OCI-LY7 (cell line): ENCODE measurements at regions of chr6 and their contacts with region 1.

Region 1: GRCh38 chr6:100833972-100834574 is 47.1 kb downstream of the ASCC3 start:
- DNase-seq: no peak
- H3K4me3 ChIP-seq: no peak overlapping the region
- H3K27ac ChIP-seq: no peak overlapping the region
- H3K4me1 ChIP-seq: no peaks in the 10 kb centered on the region
- CTCF ChIP-seq: no peak

Region 2: GRCh38 chr6:100846276-100846675 is 12.2 kb after region 1 on chr6:
- CTCF ChIA-PET with region 1: no interaction called
- POLR2A ChIA-PET with region 1: interaction called, 13 read pairs
- intact Hi-C with region 1: no loop called
- DNase-seq: no peak
- H3K4me3 ChIP-seq: no peak overlapping the region
- H3K27ac ChIP-seq: no peak overlapping the region
- H3K4me1 ChIP-seq: no peaks in the 10 kb centered on the region
- CTCF ChIP-seq: no peak